Ovary (tissue), 10 donors: ENCODE measurements at regions of chr1 and their contacts with region 1.

Region 1: GRCh38 chr1:244835276-244836134 is at the start of gene COX20:
- DNase-seq: peak; percentile 89 to 95 (median 93)
- H3K4me3 ChIP-seq: peak within 1 kb of the TSS; percentile 91
- H3K27ac ChIP-seq: peak within 1 kb of the TSS; percentile 97 to 98
- H3K4me1 ChIP-seq: peaks cover 4% of the 10 kb centered on the region
- H3K27me3 ChIP-seq: no peaks in the 10 kb centered on the region
- CTCF ChIP-seq: peak in 1 of 3 donors; percentile 6
- EP300 ChIP-seq: peak; percentile 39
- POLR2A ChIP-seq: peak; percentile 57
- total RNA-seq, gene COX20: 25.2 to 40.0 (median 35.8) TPM

Region 2: GRCh38 chr1:244705261-244706234 is 130.0 kb before region 1 on chr1:
- intact Hi-C with region 1: no loop called
- DNase-seq: no peak
- H3K4me3 ChIP-seq: no peak overlapping the region
- H3K27ac ChIP-seq: no peak overlapping the region
- H3K4me1 ChIP-seq: no peaks in the 10 kb centered on the region
- H3K27me3 ChIP-seq: no peaks in the 10 kb centered on the region
- CTCF ChIP-seq: no peak
- EP300 ChIP-seq: no peak
- POLR2A ChIP-seq: no peak

Region 3: GRCh38 chr1:244970661-244971551 is 135.4 kb after region 1 on chr1:
- intact Hi-C with region 1: loop called in 2 of 4 experiments (anchors 10 kb)
- DNase-seq: peak; percentile 94 to 96 (median 95)
- H3K4me3 ChIP-seq: peak overlapping the region; percentile 86
- H3K27ac ChIP-seq: peak overlapping the region; percentile 97 to 98
- H3K4me1 ChIP-seq: peaks cover 4% of the 10 kb centered on the region
- H3K27me3 ChIP-seq: no peaks in the 10 kb centered on the region
- CTCF ChIP-seq: peak; percentile 29 to 84 (median 82)
- EP300 ChIP-seq: no peak
- POLR2A ChIP-seq: peak; percentile 30

Region 4: DNA sequence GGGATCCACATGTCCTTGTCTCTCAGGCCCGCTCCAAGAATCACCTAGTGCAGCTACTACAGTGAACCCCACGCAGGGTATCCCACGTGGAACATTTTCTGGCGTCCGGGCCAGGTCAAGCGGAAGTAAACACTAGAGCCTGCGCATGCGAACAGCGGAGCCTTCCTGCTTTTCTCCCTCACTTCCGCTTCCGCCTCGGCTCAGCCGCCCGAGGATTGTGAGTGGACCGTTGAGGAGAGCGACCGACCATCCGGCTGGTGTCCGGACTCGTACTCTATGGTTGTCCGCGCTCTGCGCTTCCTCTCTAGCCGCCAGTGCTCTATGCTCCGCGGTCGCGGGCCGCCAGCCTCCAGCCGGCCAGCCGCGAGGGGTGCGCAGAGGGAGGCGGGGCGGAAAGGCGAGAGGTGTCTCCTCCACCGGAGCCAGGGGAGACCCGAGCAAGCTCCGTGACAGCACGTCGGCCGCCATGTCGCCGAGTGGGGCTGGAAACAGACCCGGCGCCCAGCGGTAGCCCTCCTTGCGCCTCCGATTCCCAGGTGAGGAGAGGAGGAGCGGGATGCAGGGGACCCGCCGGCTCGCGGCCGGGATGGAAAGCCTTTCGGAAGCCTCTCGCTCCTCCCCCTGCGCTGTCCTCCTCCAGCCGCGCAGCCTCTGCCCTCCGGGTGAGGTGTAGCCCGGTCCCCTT is 1730.8 kb after region 1 on chr1 and contains the starts of genes CNST and TFB2M:
- intact Hi-C with region 1: loop called in 1 of 4 experiments (anchors 10 kb)
- DNase-seq: peak; percentile 96 to 98 (median 97)
- H3K4me3 ChIP-seq: peak within 1 kb of the TSS; percentile 63
- H3K27ac ChIP-seq: peak within 1 kb of the TSS; percentile 92 to 93
- H3K4me1 ChIP-seq: peaks cover 7% of the 10 kb centered on the region
- H3K27me3 ChIP-seq: no peaks in the 10 kb centered on the region
- CTCF ChIP-seq: no peak
- EP300 ChIP-seq: no peak
- POLR2A ChIP-seq: peak; percentile 86
- total RNA-seq, gene CNST: 16.0 to 31.2 (median 23.5) TPM
- total RNA-seq, gene TFB2M: 7.1 to 9.8 (median 9.0) TPM